ENCODE measurements at regions of chr1 and their contacts with region 1.

Region 1: DNA sequence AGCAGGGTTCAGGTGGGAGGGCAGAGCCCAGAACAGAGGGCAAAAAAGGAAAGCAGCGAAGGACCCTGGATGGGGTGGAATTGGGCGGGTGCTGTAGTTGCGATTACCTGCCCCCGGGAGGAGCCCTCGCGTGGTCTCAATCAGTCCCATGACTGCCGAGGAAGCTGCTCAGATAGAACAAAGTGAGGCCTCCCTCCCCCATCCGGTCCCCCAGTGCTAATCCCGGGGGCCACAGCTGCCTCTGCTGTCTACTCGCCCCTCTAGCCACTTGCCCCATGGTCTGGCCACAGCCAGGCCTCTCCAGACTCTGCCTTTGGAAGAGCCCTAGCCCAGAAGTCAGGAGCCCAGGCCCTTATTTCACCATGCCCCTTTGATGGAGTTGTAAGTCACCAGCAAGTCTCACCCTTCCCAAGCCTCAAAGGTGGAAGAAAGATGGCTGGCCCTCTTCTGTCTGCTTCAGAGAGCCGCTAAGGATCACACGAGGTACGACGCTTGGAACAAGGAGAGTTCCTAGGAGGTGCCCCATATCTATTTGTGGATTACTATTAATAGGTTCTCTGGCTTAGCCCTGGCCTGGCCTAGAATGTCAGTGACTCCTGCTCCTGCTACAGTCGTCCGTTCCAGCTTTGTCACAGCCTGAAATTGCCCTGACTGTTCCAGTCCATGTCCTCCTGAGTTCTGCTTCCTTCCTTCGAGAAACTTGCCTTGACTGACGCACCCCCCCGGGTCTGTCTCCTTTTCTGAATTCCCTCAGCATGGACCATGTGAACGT is 16.4 kb downstream of the ECHDC2 start:
- DNase-seq: peak; percentile 88
- H3K4me3 ChIP-seq: no peak overlapping the region
- H3K27ac ChIP-seq: no peak overlapping the region
- H3K4me1 ChIP-seq: no peaks in the 10 kb centered on the region; a peak in 1 of 4 replicates
- H3K27me3 ChIP-seq: no peaks in the 10 kb centered on the region
- CTCF ChIP-seq: peak; percentile 61
- EP300 ChIP-seq: no peak
- RAD21 ChIP-seq: peak; percentile 78

Region 2: GRCh38 chr1:52892424-52893215 is 12.5 kb before region 1 on chr1:
- CTCF ChIA-PET with region 1: interaction called, 22 read pairs
- POLR2A ChIA-PET with region 1: no interaction called
- DNase-seq: no peak
- H3K4me3 ChIP-seq: no peak overlapping the region
- H3K27ac ChIP-seq: no peak overlapping the region
- H3K4me1 ChIP-seq: no peaks in the 10 kb centered on the region
- H3K27me3 ChIP-seq: no peaks in the 10 kb centered on the region
- CTCF ChIP-seq: no peak
- EP300 ChIP-seq: no peak
- RAD21 ChIP-seq: no peak

Region 3: DNA sequence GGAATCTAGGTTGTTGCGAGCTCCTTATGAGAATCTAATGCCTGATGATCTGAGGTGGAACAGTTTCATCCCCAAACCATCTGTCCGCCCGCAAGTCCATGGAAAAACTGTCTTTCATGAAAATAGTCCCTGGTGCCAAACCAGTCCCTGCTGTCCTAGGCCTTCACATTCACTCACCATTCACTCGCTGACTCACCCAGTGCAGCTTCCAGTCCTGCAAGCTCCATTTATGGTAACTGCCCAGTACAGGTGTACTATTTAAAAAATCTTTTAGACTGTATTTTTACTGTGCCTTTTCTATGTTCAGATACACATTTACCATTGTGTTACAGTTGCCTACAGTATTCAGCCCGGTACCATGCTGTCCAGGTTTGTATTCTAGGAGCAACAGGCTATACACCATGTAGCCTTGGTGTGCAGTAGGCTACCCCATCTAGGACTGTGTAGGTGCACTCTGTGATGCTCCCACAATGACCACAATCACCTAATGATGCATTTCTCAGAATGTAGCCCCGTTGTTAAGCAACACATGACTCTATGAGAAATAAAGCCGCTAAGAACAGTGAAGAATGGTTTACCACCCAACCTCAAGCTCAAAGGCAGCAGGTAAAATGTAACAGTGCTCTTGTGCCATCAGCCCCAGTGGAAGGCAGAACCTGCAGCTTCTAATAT is 14.1 kb after region 1 on chr1:
- CTCF ChIA-PET with region 1: interaction called, 10 read pairs
- POLR2A ChIA-PET with region 1: no interaction called
- DNase-seq: no peak
- H3K4me3 ChIP-seq: no peak overlapping the region
- H3K27ac ChIP-seq: no peak overlapping the region
- H3K4me1 ChIP-seq: no peaks in the 10 kb centered on the region
- H3K27me3 ChIP-seq: no peaks in the 10 kb centered on the region
- CTCF ChIP-seq: no peak
- EP300 ChIP-seq: no peak
- RAD21 ChIP-seq: no peak

Region 4: GRCh38 chr1:53176452-53177208 is 271.5 kb after region 1 on chr1:
- CTCF ChIA-PET with region 1: interaction called, 65 read pairs
- POLR2A ChIA-PET with region 1: no interaction called
- DNase-seq: peak; percentile 58
- H3K4me3 ChIP-seq: no peak overlapping the region
- H3K27ac ChIP-seq: no peak overlapping the region; a peak in 1 of 4 replicates
- H3K4me1 ChIP-seq: peaks cover 7 to 9% of the 10 kb centered on the region in 2 experiments; a peak in 2 of 4 replicates
- H3K27me3 ChIP-seq: no peaks in the 10 kb centered on the region
- CTCF ChIP-seq: no peak
- EP300 ChIP-seq: no peak
- RAD21 ChIP-seq: peak; percentile 84